Left cardiac atrium (tissue), 4 donors: ENCODE measurements at regions of chr6 and their contacts with region 1.

Region 1: DNA sequence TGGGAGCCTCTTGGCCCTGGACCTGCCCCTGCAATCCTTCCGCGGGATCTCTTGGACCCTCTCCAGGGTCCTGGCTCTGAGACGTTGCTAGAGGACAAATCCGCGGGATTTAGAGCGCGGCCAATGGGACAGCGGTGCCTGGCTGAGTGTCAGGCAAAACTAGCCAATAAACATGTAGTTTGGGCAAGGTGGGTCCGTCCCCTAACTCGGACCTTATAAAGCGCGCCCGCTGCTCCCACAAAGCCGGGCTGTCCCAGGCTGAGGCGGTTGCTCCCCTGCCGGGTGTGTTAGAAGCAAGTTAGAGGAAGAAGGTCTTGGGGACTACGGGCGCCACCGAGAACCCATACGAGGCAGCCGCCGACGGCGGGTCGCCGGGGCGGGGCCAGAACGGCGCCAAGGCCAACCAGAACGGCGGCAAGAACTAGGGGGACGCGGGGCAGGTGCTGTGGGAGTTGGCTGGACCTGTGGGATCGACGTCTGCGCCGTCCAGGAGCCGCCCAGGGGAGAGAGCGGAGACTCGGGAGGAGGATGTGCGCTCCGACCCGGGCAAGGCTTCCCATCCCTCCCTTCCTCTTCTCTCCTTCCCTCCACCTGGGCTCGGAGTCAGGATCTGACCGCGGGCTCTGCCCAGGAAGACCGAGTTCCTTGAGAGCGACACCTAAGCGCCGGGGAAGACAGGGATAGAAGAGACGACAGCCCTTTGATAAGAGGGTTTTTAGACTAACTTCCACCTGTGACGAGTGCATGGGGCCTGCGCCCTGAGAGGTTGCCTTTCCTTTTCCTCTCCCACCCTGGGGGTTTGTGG is 6.5 kb upstream of the TMEM14A start:
- DNase-seq: peak; percentile 91
- ATAC-seq: peak; percentile 99

Region 2: GRCh38 chr6:52284460-52285176 is 379.8 kb before region 1 on chr6 and contains the start of gene MCM3:
- intact Hi-C with region 1: loop called in 1 of 2 experiments (anchors 10 kb)
- DNase-seq: peak; percentile 98
- ATAC-seq: peak; percentile 100
- total RNA-seq, gene MCM3: 27.2 to 28.4 TPM

Region 3: GRCh38 chr6:52293067-52293466 is 371.3 kb before region 1 on chr6:
- intact Hi-C with region 1: loop called (anchors 5 to 10 kb)
- DNase-seq: no peak
- ATAC-seq: no peak

Region 4: GRCh38 chr6:52503848-52504781 is 160.3 kb before region 1 on chr6:
- intact Hi-C with region 1: loop called in 1 of 2 experiments (anchors 5 kb)
- DNase-seq: peak; percentile 91
- ATAC-seq: peak; percentile 78 to 88